Naive thymus-derived CD4-positive, alpha-beta T cell (primary cell): ENCODE measurements at regions of chr6 and their contacts with region 1.

Region 1: GRCh38 chr6:111793711-111794111 is 79.5 kb downstream of the FYN start:
- DNase-seq: peak in 1 of 9 donors; percentile 32
- ATAC-seq: peak; percentile 83
- H3K4me3 ChIP-seq: peak overlapping the region; percentile 63
- H3K4me3 Mint-ChIP-seq: peak overlapping the region in 9 of 10 donors; percentile 51 to 79 (median 62)
- H3K27ac ChIP-seq: peak overlapping the region; percentile 53
- H3K27ac Mint-ChIP-seq: peak overlapping the region in 8 of 9 donors; percentile 46 to 91 (median 84)
- H3K4me1 ChIP-seq: peaks cover 68% of the 10 kb centered on the region in 2 donors
- H3K4me1 Mint-ChIP-seq: peaks cover 6 to 67% (median 9%) of the 10 kb centered on the region in 7 donors
- H3K27me3 ChIP-seq: no peaks in the 10 kb centered on the region
- H3K27me3 Mint-ChIP-seq: no peaks in the 10 kb centered on the region

Region 2: GRCh38 chr6:111680015-111680712 is 113.5 kb before region 1 on chr6:
- CTCF ChIA-PET with region 1: no interaction called
- POLR2A ChIA-PET with region 1: no interaction called
- intact Hi-C with region 1: no loop called
- DNase-seq: no peak
- ATAC-seq: no peak
- H3K4me3 ChIP-seq: no peak overlapping the region
- H3K4me3 Mint-ChIP-seq: no peak overlapping the region
- H3K27ac ChIP-seq: peak overlapping the region; percentile 26
- H3K27ac Mint-ChIP-seq: peak overlapping the region in 8 of 9 donors; percentile 11 to 80 (median 76)
- H3K4me1 ChIP-seq: peaks cover 27 to 31% of the 10 kb centered on the region in 2 donors
- H3K4me1 Mint-ChIP-seq: peaks cover 30 to 94% (median 90%) of the 10 kb centered on the region in 7 donors
- H3K27me3 ChIP-seq: no peaks in the 10 kb centered on the region
- H3K27me3 Mint-ChIP-seq: no peaks in the 10 kb centered on the region

Region 3: DNA sequence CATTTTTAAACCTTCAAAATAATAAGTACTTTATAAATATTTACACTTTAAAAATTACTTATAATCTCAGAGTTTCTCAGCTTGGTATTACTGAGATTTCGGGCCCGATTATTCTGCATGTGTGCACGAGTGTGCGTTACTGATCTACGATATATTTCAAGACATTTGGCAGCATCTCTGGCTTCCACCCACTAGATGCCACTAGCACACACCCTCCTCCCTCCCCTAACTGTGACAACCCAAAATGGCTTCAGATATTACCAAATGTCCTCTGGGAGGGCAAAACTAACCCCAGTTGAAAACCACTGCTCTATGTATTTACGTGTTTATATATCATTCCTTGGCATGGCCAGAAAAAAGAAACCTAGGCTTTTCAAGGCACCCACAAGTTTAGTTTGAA is 16.4 kb before region 1 on chr6:
- CTCF ChIA-PET with region 1: interaction called, 7 read pairs
- POLR2A ChIA-PET with region 1: interaction called, 8 read pairs
- intact Hi-C with region 1: loop called in 1 of 2 experiments (anchors 2 kb)
- DNase-seq: peak in 1 of 9 donors; percentile 36
- ATAC-seq: peak; percentile 73
- H3K4me3 ChIP-seq: no peak overlapping the region
- H3K4me3 Mint-ChIP-seq: peak overlapping the region in 2 of 10 donors; percentile 26 to 40
- H3K27ac ChIP-seq: peak overlapping the region; percentile 56
- H3K27ac Mint-ChIP-seq: peak overlapping the region; percentile 2 to 93 (median 81)
- H3K4me1 ChIP-seq: peaks cover 71 to 85% of the 10 kb centered on the region in 2 donors
- H3K4me1 Mint-ChIP-seq: peaks cover 46 to 97% (median 89%) of the 10 kb centered on the region in 7 donors
- H3K27me3 ChIP-seq: no peaks in the 10 kb centered on the region
- H3K27me3 Mint-ChIP-seq: no peaks in the 10 kb centered on the region

Region 4: GRCh38 chr6:111812060-111813038 is 18.6 kb after region 1 on chr6:
- CTCF ChIA-PET with region 1: no interaction called
- POLR2A ChIA-PET with region 1: no interaction called
- intact Hi-C with region 1: loop called in 1 of 2 experiments (anchors 2 kb)
- DNase-seq: peak in 2 of 9 donors; percentile 21 to 23
- ATAC-seq: peak; percentile 38
- H3K4me3 ChIP-seq: no peak overlapping the region
- H3K4me3 Mint-ChIP-seq: peak overlapping the region; percentile 8 to 81 (median 70)
- H3K27ac ChIP-seq: peak overlapping the region; percentile 66
- H3K27ac Mint-ChIP-seq: peak overlapping the region; percentile 83 to 97 (median 88)
- H3K4me1 ChIP-seq: peaks cover 72% of the 10 kb centered on the region in 2 donors
- H3K4me1 Mint-ChIP-seq: peaks cover 47 to 91% (median 86%) of the 10 kb centered on the region in 7 donors
- H3K27me3 ChIP-seq: no peaks in the 10 kb centered on the region
- H3K27me3 Mint-ChIP-seq: no peaks in the 10 kb centered on the region

Region 5: DNA sequence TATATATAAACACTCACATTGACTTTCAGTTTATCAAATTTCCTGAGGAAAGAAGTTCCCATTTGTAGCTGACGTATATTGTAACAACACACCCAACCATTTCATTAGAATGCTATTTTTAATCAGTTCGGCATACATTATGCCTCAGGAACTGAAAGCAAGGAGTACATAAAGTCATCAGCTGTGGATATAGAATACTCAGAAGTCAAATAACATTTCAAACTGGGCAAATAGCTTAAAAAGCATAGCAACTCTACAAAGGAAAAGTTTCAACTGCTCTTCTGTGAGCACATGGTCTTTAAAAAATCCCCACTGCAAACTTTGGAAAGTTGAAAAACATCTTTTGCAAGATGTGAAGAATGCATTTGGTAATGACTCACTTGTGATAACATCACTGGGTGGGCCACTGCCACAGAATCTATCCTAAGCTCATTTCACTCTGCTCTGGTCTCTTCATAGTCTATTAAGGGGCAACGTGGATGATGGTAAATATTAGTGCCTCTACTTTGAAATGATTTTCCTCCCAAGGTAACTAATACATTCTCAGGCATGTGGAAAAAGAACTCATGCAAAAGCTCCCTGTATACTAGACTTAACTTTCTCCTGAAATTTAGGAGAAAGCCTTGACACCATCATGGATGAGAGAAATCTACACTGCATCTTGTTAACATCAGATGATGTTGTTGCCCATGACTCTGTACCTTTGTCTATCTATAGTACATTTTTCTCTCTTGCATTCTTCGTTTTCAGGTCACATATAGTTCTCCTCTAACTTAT is 30.3 kb after region 1 on chr6:
- CTCF ChIA-PET with region 1: no interaction called
- POLR2A ChIA-PET with region 1: no interaction called
- intact Hi-C with region 1: loop called in 1 of 2 experiments (anchors 2 kb)
- DNase-seq: peak in 1 of 9 donors; percentile 61
- ATAC-seq: peak; percentile 75
- H3K4me3 ChIP-seq: no peak overlapping the region
- H3K4me3 Mint-ChIP-seq: peak overlapping the region in 9 of 10 donors; percentile 2 to 64 (median 43)
- H3K27ac ChIP-seq: peak overlapping the region; percentile 56
- H3K27ac Mint-ChIP-seq: peak overlapping the region; percentile 5 to 92 (median 78)
- H3K4me1 ChIP-seq: peaks cover 39 to 56% of the 10 kb centered on the region in 2 donors
- H3K4me1 Mint-ChIP-seq: peaks cover 51 to 91% (median 86%) of the 10 kb centered on the region in 7 donors
- H3K27me3 ChIP-seq: no peaks in the 10 kb centered on the region
- H3K27me3 Mint-ChIP-seq: no peaks in the 10 kb centered on the region